Endothelial cell of umbilical vein (primary cell): ENCODE measurements at regions of chr11 and their contacts with region 1.

Region 1: GRCh38 chr11:73478738-73479347 is 102.6 kb downstream of the RELT start:
- DNase-seq: peak; percentile 59
- H3K4me3 ChIP-seq: no peak overlapping the region
- H3K27ac ChIP-seq: no peak overlapping the region
- H3K4me1 ChIP-seq: no peaks in the 10 kb centered on the region
- H3K27me3 ChIP-seq: no peaks in the 10 kb centered on the region
- CTCF ChIP-seq: peak; percentile 79 to 87
- POLR2A ChIP-seq: no peak

Region 2: GRCh38 chr11:73227588-73228211 is 251.1 kb before region 1 on chr11:
- CTCF ChIA-PET with region 1: no interaction called
- POLR2A ChIA-PET with region 1: no interaction called
- dilution Hi-C with region 1: no loop called
- intact Hi-C with region 1: no loop called
- DNase-seq: no peak
- H3K4me3 ChIP-seq: no peak overlapping the region
- H3K27ac ChIP-seq: no peak overlapping the region
- H3K4me1 ChIP-seq: no peaks in the 10 kb centered on the region
- H3K27me3 ChIP-seq: no peaks in the 10 kb centered on the region
- CTCF ChIP-seq: no peak
- POLR2A ChIP-seq: no peak

Region 3: GRCh38 chr11:73463359-73463758 is 15.5 kb before region 1 on chr11:
- CTCF ChIA-PET with region 1: interaction called, 32 read pairs
- POLR2A ChIA-PET with region 1: no interaction called
- dilution Hi-C with region 1: no loop called
- intact Hi-C with region 1: no loop called
- DNase-seq: no peak
- H3K4me3 ChIP-seq: no peak overlapping the region
- H3K27ac ChIP-seq: no peak overlapping the region
- H3K4me1 ChIP-seq: no peaks in the 10 kb centered on the region
- H3K27me3 ChIP-seq: no peaks in the 10 kb centered on the region
- CTCF ChIP-seq: no peak
- POLR2A ChIP-seq: no peak

Region 4: DNA sequence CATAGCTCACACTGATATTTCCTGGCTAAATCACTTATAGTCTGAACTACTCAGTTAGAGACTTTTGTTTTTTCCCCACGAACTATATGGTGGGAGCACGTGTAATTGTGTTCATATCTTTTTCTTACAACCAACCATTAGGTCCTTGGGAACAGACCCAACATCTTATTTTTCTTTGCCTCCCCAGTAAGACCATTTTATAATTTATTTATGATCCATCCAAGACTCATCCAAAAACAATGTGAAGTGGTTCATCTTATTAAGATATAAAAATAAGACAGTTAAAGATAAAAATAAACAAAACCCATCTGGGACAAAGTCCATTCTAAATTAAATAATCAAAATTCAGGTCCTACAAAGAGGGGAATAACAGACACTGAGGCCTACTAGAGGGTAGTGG is 28.2 kb after region 1 on chr11:
- CTCF ChIA-PET with region 1: interaction called, 11 read pairs
- POLR2A ChIA-PET with region 1: no interaction called
- dilution Hi-C with region 1: no loop called
- intact Hi-C with region 1: no loop called
- DNase-seq: no peak
- H3K4me3 ChIP-seq: no peak overlapping the region
- H3K27ac ChIP-seq: no peak overlapping the region
- H3K4me1 ChIP-seq: no peaks in the 10 kb centered on the region
- H3K27me3 ChIP-seq: no peaks in the 10 kb centered on the region
- CTCF ChIP-seq: no peak
- POLR2A ChIP-seq: no peak

Region 5: DNA sequence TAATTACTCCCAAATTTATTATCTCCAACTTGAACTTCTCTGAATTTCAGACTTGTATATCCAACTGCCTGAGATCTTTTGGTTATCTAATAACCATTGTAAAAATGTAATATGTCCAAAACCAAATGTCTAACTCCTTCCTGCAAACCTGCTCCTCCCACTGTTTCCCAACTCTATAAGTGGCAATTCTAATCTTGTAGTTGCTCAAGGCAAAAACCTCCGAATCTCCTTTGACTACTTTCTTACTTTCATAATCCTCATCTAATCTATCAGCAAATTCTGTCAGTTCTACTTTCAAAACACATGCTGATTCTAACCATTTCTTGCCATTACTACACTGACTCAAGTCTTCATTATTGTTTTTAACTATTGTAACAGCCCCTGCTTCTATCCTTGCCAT is 63.3 kb after region 1 on chr11:
- CTCF ChIA-PET with region 1: interaction called, 10 read pairs
- POLR2A ChIA-PET with region 1: no interaction called
- dilution Hi-C with region 1: no loop called
- intact Hi-C with region 1: no loop called
- DNase-seq: no peak
- H3K4me3 ChIP-seq: no peak overlapping the region
- H3K27ac ChIP-seq: no peak overlapping the region
- H3K4me1 ChIP-seq: no peaks in the 10 kb centered on the region
- H3K27me3 ChIP-seq: no peaks in the 10 kb centered on the region
- CTCF ChIP-seq: no peak
- POLR2A ChIP-seq: no peak

Region 6: DNA sequence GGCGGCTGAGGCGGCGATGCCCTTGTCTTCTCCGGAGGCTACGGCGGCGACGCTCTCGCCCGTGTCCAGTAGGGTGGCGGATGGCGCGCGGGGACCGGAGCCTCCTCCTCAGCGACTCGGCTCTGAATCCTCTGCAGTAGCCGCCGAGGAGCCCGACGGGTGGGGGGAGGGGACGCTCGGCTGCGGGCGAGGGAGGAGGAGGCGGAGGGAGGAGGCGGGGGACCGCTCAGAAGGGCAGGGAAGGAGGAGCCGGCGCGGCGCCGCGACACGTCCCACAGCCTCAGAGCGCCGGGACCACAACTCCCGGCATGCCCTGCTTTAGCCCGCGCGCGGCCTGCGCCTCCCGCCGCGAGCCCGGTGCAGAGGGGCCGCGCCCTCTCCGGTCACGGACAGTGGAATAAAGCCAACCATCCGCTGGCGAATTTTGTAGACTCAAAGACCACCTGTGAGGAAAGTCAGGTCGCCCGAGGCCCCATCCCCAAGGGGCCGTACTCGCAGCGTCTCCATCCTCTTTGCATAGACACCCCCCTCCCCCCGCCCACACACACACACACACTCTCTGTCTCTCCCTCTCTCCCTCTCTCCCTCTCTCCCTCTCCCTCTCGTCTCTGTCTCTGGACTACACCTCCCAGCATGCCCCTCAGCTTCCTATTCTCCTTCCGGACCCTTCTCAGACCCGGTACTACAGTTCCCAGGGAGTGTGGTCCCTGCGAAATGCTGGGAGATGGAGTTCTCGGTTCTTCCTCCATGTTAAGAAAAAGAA is 119.3 kb after region 1 on chr11 and contains the start of gene FAM168A:
- CTCF ChIA-PET with region 1: interaction called, 11 read pairs
- POLR2A ChIA-PET with region 1: no interaction called
- dilution Hi-C with region 1: no loop called
- intact Hi-C with region 1: loop called (anchors 2 kb)
- DNase-seq: peak; percentile 95
- H3K4me3 ChIP-seq: peak within 1 kb of the TSS; percentile 70 to 97 (median 74)
- H3K27ac ChIP-seq: no peak within 1 kb of the TSS
- H3K4me1 ChIP-seq: peaks cover 9% of the 10 kb centered on the region
- H3K27me3 ChIP-seq: no peaks in the 10 kb centered on the region
- CTCF ChIP-seq: peak; percentile 3 to 10
- POLR2A ChIP-seq: peak; percentile 83
- total RNA-seq, gene FAM168A: 20.5 and 22.5 TPM in 2 replicates